Motor neuron (in vitro differentiated cells): ENCODE measurements at regions of chr21 and their contacts with region 1.

Region 1: GRCh38 chr21:36589355-36589971 is 109.5 kb upstream of the SIM2 start:
- ATAC-seq: peak in 3 of 8 experiments; percentile 94 to 98 (median 96)
- H3K4me3 ChIP-seq: no peak overlapping the region
- H3K27ac ChIP-seq: no peak overlapping the region
- H3K4me1 ChIP-seq: no peaks in the 10 kb centered on the region

Region 2: GRCh38 chr21:36419996-36420395 is 169.5 kb before region 1 on chr21:
- in situ Hi-C with region 1: loop called in 1 of 9 experiments (anchors 25 kb)
- ATAC-seq: peak; percentile 85 to 97 (median 93)
- H3K4me3 ChIP-seq: no peak overlapping the region
- H3K27ac ChIP-seq: no peak overlapping the region
- H3K4me1 ChIP-seq: no peaks in the 10 kb centered on the region

Region 3: DNA sequence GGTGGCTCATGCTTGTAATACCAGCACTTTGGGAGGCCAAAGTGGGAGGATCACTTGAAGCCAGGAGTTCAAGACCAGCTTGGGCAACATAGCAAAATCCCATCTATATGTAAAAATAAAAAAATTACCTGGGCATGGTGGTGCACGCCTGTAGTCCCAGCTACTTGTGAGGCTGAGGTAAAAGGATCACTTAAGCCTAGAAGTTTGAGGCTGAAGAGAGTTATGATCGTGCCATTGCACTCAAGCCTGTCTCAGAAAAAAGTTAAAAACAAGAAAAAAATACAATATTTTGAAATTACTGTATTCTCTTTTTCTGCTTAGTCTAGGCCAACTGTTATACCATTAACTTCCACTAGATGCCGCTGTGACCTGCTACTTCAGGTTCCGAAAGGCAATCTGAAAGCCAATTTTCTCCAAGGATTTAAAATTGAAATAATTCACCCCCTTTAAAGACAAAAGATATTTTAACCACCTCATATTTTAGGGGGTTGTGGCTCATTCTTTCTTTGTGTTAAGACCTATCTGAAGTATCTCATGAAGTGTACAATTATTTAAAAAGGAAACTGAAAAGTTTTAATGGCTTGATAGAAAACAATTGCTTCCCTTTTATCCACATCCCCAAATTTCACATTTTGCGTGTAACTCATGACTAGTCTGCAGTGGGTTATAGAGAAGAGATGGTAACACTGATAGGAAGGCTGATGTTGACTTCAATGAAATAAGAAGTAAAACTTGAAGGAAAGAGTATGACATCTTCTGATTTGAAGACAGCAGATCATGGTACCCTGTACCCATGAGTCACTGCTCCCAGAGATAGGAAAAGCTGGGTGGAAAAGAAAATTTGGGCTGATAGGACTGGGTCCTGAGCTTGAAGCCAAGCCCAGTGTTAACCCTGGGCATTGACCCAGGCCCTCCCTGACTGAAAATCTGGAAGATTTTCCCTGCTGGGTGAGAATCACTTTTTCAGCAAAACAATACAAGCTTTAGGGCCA is 85.1 kb before region 1 on chr21:
- in situ Hi-C with region 1: loop called in 1 of 9 experiments (anchors 10 kb)
- ATAC-seq: no peak
- H3K4me3 ChIP-seq: no peak overlapping the region
- H3K27ac ChIP-seq: no peak overlapping the region
- H3K4me1 ChIP-seq: no peaks in the 10 kb centered on the region